ENCODE measurements at regions of chr2 and their contacts with region 1.

Region 1: DNA sequence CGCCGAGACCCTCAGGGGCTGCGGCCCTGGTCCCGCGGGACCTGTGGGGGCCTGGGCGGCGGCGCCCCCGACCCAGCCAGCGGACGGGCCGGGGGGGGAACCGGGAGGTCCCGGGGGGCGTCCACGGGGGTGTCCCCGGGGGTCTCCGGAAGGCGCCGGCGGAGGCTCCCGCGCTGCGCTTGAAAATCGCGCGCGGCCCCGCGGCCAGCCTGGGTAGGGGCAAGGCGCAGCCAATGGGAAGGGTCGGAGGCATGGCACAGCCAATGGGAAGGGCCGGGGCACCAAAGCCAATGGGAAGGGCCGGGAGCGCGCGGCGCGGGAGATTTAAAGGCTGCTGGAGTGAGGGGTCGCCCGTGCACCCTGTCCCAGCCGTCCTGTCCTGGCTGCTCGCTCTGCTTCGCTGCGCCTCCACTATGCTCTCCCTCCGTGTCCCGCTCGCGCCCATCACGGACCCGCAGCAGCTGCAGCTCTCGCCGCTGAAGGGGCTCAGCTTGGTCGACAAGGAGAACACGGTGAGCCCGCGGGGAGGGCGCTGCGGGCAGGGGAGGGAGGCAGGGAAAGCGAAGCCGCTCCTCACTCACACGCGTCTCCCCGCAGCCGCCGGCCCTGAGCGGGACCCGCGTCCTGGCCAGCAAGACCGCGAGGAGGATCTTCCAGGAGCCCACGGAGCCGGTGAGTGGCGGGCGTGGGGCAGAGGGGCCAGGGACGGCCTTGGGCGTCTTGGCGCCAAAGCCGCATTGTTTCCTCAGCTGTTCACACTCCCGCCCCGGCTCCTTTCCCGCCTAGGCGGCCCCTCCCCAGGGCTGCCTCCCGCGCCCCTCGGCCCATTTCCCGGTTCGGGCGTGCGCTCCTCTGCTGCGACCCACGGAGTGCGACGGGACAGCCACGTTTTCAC is at the start of gene RRM2:
- DNase-seq: peak; percentile 88
- H3K4me3 ChIP-seq: peak within 1 kb of the TSS; percentile 43 to 93 (median 88)
- H3K27ac ChIP-seq: peak within 1 kb of the TSS; percentile 75
- H3K4me1 ChIP-seq: peaks cover 35% of the 10 kb centered on the region
- H3K27me3 ChIP-seq: no peaks in the 10 kb centered on the region
- CTCF ChIP-seq: no peak
- total RNA-seq, gene RRM2: 4.0 to 103 TPM

Region 2: DNA sequence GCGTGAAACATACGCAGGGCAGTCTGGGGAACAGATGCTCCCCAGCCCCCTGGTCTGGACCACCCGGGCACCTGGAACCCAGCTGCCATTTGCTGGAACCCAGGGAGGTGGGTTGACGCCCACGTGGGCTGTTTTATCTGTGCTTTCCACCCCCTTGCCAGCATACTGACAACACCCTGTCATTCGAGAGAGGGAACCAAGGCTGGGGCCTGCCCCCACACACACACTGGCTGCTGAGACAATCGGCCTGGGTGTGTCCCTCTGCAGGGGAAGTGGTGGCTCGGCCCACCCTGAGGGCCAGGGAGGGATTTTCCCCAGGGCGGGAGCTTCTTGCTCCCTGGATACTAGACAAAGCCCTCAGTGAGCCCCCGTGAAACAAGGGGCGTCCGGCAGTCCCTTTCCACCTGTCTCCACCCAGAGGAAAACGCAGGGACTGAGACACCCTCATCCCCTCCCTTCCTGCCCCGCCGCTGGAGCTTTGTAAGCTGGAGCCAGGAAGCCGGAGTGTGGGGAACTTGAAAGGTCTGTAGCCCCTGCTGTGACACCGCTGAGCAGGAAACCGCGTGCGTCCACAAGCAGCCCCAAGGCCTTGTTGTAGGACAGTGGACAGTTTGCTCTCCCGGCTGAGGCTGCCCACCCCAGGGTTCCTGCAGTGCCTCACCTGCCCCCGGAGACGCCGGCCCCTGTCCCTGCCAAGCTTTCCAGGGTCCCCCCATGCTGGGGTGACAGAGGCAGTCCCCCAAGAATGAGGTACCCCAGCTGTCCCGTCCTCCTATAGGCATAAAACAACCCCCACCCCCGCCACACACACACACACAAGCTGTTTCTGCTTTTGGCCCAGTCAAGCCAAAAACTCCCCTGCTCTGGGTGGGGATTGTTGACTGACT is 93.4 kb before region 1 on chr2:
- CTCF ChIA-PET with region 1: no interaction called
- dilution Hi-C with region 1: loop called (anchors 5 kb)
- in situ Hi-C with region 1: no loop called
- intact Hi-C with region 1: no loop called
- DNase-seq: no peak
- H3K4me3 ChIP-seq: no peak overlapping the region
- H3K27ac ChIP-seq: no peak overlapping the region
- H3K4me1 ChIP-seq: no peaks in the 10 kb centered on the region
- H3K27me3 ChIP-seq: no peaks in the 10 kb centered on the region
- CTCF ChIP-seq: no peak

Region 3: GRCh38 chr2:10135296-10136089 is 12.9 kb after region 1 on chr2:
- CTCF ChIA-PET with region 1: no interaction called
- dilution Hi-C with region 1: no loop called
- in situ Hi-C with region 1: no loop called
- intact Hi-C with region 1: loop called (anchors 2 kb)
- DNase-seq: peak; percentile 57
- H3K4me3 ChIP-seq: no peak overlapping the region
- H3K27ac ChIP-seq: no peak overlapping the region
- H3K4me1 ChIP-seq: peaks cover 24% of the 10 kb centered on the region
- H3K27me3 ChIP-seq: no peaks in the 10 kb centered on the region
- CTCF ChIP-seq: no peak

Region 4: DNA sequence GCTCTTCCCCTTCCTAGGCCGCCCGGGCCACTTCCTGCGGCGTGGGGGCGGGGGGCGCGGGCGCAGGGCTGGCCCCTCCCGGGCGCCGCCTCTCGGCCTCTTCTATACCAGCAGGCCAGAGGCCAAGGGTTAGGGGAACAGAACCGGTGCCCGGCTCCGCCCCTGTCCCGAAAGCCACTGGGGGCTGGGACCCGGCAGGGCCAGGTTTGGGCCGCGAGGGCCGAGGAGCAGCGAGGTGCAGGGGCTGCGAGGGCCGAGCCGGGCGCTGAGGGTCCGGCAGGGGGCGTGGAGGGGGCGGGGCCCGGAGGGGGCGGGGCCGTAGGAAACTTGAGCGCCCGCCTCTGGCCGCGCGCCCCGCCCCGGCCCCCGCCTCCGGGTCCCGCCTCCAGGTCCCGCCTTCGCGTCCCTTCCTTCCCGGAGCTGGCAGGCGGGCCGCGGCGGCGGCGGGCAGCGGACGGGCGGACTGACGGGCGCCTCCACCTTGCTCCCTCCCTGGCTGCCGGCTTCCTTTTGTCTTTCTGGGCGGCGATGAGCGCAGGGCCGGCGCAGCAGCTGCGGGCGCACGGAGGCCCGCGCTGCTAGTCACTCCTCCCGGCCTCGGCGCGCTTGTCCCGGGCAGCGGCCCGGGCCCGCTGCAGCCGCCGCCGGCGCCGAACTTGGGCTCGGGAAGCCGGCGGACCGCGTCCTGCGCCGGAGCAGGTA is 180.0 kb after region 1 on chr2 and contains the start of gene HPCAL1:
- CTCF ChIA-PET with region 1: no interaction called
- dilution Hi-C with region 1: no loop called
- in situ Hi-C with region 1: loop called in 1 of 2 experiments (anchors 10 kb)
- intact Hi-C with region 1: loop called (anchors 1 kb)
- DNase-seq: peak; percentile 80
- H3K4me3 ChIP-seq: peak within 1 kb of the TSS; percentile 58 to 89 (median 87)
- H3K27ac ChIP-seq: no peak within 1 kb of the TSS
- H3K4me1 ChIP-seq: peaks cover 19% of the 10 kb centered on the region
- H3K27me3 ChIP-seq: no peaks in the 10 kb centered on the region
- CTCF ChIP-seq: peak; percentile 28 to 65
- total RNA-seq, gene HPCAL1: 26.3 to 82.8 TPM

Region 5: DNA sequence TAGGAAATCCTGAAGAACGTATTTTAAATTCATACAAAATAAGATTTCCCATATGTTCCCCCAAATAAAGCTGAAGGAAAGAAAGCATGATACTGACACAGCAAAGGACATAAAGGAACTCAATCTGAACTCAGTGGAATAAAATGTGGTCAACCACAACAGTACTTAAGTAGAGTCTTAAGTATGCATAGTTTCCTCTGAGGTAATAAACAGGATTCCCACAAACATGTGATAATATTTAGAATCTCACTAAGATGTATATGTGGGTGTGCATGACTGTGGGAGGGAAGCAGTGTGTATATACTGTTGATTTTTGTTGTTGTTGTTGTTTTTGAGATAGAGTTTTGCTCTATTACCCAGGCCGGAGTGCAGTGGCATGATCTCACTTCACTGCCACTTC is 497.8 kb after region 1 on chr2:
- CTCF ChIA-PET with region 1: no interaction called
- dilution Hi-C with region 1: no loop called
- in situ Hi-C with region 1: no loop called
- intact Hi-C with region 1: no loop called
- DNase-seq: peak; percentile 68
- H3K4me3 ChIP-seq: no peak overlapping the region
- H3K27ac ChIP-seq: no peak overlapping the region
- H3K4me1 ChIP-seq: peaks cover 5% of the 10 kb centered on the region
- H3K27me3 ChIP-seq: no peaks in the 10 kb centered on the region
- CTCF ChIP-seq: no peak

Measured in mammary epithelial cell (primary cell).